Mammary epithelial cell (primary cell): ENCODE measurements at regions of chr4 and their contacts with region 1.

Region 1: DNA sequence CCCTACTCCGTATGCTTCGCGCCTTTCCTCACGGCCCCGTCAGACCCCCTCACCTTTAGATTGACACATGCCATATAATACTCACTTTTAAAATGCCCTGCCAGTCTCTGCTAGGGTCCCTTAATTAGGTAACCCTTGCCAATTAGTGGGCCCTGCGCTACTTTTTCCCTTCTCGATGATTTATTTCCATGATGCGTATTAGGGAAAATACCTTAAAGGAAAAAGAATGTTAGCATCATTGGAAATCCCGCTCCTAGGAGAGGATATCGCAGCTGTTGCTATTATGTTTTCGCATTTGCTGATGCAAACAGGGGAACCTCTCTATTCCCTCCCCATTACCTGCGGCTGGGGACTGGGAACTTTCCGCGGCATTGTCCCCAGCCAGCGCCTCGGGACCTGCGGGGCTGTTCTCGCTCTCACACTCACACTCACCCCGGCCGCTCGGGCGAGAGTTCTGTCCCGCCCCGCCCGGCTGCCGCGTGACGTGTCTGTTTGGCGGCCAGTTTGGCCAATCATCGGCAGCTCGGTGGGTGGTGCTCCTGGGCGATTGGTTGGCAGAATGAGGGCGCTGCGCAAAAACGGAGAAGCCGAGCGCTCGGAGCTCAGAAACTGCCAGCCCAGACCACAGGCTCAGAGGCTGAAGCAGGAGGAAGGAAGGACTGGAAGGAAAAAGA is at the start of gene PCDH10:
- DNase-seq: peak; percentile 77
- H3K4me3 ChIP-seq: peak within 1 kb of the TSS; percentile 39 to 54 (median 49)
- H3K27ac ChIP-seq: no peak within 1 kb of the TSS
- H3K4me1 ChIP-seq: peaks cover 27% of the 10 kb centered on the region
- H3K27me3 ChIP-seq: peaks cover 73% of the 10 kb centered on the region
- CTCF ChIP-seq: no peak
- total RNA-seq, gene PCDH10: not detected

Region 2: GRCh38 chr4:131644619-131645018 is 1504.2 kb before region 1 on chr4:
- CTCF ChIA-PET with region 1: no interaction called
- dilution Hi-C with region 1: no loop called
- in situ Hi-C with region 1: no loop called
- intact Hi-C with region 1: no loop called
- DNase-seq: peak; percentile 45
- H3K4me3 ChIP-seq: no peak overlapping the region
- H3K27ac ChIP-seq: no peak overlapping the region
- H3K4me1 ChIP-seq: no peaks in the 10 kb centered on the region
- H3K27me3 ChIP-seq: no peaks in the 10 kb centered on the region
- CTCF ChIP-seq: peak; percentile 78 to 90

Region 3: DNA sequence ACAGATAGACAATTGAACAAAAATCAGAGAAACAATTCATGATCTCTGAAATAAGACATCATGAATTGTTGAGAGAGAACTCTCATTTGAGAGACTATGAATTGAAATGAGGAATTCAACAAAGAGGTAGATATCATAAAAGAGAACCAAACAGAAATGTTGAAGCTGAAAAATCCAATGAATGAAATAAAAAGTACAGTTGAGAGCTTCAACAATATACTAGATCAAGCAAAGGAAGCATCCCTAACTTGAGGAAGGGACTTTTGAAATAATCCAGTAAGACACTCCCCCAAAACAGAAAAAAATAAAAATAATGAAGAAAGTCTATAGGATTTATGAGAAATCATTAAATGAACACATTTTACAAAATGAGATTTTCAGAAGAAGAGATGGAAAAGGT is 309.8 kb before region 1 on chr4:
- CTCF ChIA-PET with region 1: no interaction called
- dilution Hi-C with region 1: no loop called
- in situ Hi-C with region 1: no loop called
- intact Hi-C with region 1: loop called (anchors 5 kb)
- DNase-seq: no peak
- H3K4me3 ChIP-seq: no peak overlapping the region
- H3K27ac ChIP-seq: no peak overlapping the region
- H3K4me1 ChIP-seq: no peaks in the 10 kb centered on the region
- H3K27me3 ChIP-seq: no peaks in the 10 kb centered on the region
- CTCF ChIP-seq: no peak

Region 4: GRCh38 chr4:133320576-133321170 is 171.8 kb after region 1 on chr4:
- CTCF ChIA-PET with region 1: no interaction called
- dilution Hi-C with region 1: no loop called
- in situ Hi-C with region 1: no loop called
- intact Hi-C with region 1: loop called (anchors 10 kb)
- DNase-seq: peak; percentile 11
- H3K4me3 ChIP-seq: no peak overlapping the region
- H3K27ac ChIP-seq: no peak overlapping the region
- H3K4me1 ChIP-seq: no peaks in the 10 kb centered on the region
- H3K27me3 ChIP-seq: no peaks in the 10 kb centered on the region
- CTCF ChIP-seq: peak; percentile 69 to 74

Region 5: DNA sequence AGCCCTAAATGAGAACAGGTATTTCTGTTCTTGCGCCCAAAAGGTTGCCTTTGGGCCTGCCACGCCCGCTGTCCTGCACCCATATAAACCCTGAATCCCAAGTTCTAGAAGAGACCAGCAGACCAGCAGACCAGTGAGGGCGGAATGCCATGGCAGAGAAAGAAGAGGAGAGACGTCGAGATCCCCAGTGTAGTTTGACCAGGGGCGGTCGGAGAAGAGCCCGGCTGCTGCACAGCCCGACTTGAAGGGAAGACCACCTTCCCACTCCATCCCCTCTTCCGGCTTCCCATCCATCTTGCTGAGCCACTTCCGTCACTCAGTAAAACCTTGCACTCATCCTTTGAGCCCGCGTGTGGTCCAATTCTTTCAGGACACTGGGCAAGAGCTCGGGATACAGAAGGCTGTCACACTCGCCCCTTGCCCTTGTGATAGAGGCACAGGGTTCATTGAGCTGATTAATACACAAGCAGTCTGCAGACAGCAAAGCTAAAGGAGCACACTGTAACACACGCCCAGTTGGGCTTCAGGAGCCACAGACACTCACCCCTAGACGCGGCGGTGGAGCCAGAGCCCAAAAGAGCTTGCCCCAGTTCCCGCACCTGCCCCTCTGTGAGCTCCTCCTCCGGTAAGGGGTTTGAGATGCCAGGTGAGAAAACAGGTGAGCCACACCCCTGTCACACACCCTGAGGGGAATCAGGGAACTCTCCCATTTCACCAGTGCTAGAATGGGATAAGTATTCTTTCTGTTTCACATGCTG is 231.0 kb after region 1 on chr4:
- CTCF ChIA-PET with region 1: no interaction called
- dilution Hi-C with region 1: no loop called
- in situ Hi-C with region 1: no loop called
- intact Hi-C with region 1: no loop called
- DNase-seq: no peak
- H3K4me3 ChIP-seq: no peak overlapping the region
- H3K27ac ChIP-seq: no peak overlapping the region
- H3K4me1 ChIP-seq: no peaks in the 10 kb centered on the region
- H3K27me3 ChIP-seq: no peaks in the 10 kb centered on the region
- CTCF ChIP-seq: no peak

Region 6: DNA sequence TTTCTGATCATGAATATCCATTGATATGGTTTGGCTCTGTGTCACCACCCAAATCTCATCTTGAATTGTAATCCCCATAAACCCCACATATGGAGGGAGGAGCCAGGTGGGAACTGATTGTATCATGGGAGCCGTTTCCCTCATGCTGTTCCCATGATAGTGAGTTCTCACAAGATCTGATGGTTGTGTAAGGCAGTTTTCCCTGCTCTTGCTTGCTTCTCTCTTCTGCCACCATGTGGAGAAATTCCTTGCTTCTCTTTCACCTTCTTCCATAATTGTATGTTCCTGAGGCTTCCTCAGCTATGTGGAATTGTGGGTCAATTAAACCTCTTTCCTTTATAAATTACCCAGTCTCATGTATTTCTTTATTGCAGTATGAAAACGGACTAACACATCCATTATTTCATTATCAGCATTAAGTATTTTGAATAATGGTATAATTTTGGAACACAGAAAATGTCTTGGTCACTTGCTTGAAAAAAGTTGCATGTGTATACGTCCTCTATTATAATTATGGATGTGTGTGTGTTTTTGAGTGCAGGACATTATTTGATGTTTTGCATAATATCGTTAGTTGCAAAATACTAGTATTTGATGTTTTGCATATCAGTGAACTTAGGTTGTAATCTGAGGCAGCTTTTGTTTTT is 334.9 kb after region 1 on chr4:
- CTCF ChIA-PET with region 1: no interaction called
- dilution Hi-C with region 1: no loop called
- in situ Hi-C with region 1: no loop called
- intact Hi-C with region 1: loop called (anchors 2 kb)
- DNase-seq: peak; percentile 16
- H3K4me3 ChIP-seq: no peak overlapping the region
- H3K27ac ChIP-seq: no peak overlapping the region
- H3K4me1 ChIP-seq: no peaks in the 10 kb centered on the region
- H3K27me3 ChIP-seq: no peaks in the 10 kb centered on the region
- CTCF ChIP-seq: peak; percentile 47 to 79

Region 7: DNA sequence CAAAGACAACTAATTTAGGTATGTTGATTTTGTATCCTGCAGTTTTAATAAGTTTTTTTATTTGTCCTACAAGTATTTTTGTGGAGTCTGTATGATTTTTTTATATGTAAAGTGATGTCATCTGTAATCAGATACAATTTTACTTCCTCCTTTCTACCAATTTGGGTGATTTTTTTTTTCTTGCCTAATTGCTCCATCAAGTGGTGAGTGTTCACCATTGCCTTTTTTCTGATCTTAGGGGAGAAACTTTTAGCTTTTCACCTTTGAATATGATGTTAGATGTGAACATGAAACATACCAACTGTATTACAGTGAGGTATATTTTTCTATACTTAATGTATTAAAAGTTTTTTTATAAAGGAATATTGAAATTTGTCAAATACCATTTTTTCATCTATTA is 690.5 kb after region 1 on chr4:
- CTCF ChIA-PET with region 1: no interaction called
- dilution Hi-C with region 1: no loop called
- in situ Hi-C with region 1: no loop called
- intact Hi-C with region 1: loop called (anchors 10 kb)
- DNase-seq: no peak
- H3K4me3 ChIP-seq: no peak overlapping the region
- H3K27ac ChIP-seq: no peak overlapping the region
- H3K4me1 ChIP-seq: no peaks in the 10 kb centered on the region
- H3K27me3 ChIP-seq: no peaks in the 10 kb centered on the region
- CTCF ChIP-seq: peak in 1 of 2 donors; percentile 6